H1 (cell line): ENCODE measurements at regions of chr7 and their contacts with region 1.

Region 1: DNA sequence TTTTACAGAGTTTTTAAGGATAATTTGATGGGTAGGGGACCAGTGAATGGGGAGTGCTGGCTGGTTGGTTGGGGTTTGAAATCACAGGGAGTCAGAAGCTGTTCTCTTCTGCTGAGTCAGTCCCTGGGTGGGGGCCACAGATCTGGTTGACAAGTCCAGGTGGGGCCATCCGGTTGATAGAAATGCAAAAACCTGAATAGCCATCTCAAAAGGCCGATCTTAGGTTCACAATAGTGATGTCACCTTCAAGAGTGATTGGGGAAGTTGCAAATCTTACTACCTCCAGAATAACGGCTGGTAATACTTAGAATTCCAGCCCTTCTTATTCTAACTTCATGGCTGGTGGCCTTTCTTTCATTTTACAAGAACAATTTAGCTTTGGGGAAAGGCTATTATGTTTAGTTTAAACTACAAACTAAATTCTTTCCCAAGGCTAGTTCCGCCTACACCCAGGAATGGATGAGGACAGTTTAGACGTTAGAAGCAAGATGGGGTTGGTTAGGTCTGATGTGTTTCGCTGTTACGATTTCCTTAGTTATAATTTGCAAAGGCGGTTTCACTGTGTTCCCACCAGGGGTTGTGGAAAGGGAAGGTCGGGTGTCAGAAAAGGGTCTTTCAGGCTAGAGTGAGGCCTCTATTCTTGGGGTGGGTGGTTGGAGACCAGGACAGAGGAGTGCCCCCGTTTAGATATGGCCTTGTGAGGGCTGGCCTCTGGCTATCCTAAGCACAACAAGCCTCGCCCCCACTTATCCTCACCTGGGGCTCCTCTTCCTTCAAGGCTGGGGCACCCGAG is 27.4 kb downstream of the IFT22 start:
- DNase-seq: peak; percentile 82 to 92
- H3K4me3 ChIP-seq: peak overlapping the region in 2 of 4 experiments; percentile 11 to 50; a peak in 3 of 8 replicates
- H3K27ac ChIP-seq: peak overlapping the region; percentile 91
- H3K4me1 ChIP-seq: peaks cover 9 to 37% (median 22%) of the 10 kb centered on the region in 4 experiments
- H3K27me3 ChIP-seq: no peaks in the 10 kb centered on the region
- CTCF ChIP-seq: peak in 1 of 3 experiments; percentile 3; a peak in 1 of 4 replicates
- EP300 ChIP-seq: peak in 1 of 2 experiments; percentile 96; a peak in 2 of 3 replicates
- POLR2A ChIP-seq: peak; percentile 70 to 78
- RAD21 ChIP-seq: no peak

Region 2: DNA sequence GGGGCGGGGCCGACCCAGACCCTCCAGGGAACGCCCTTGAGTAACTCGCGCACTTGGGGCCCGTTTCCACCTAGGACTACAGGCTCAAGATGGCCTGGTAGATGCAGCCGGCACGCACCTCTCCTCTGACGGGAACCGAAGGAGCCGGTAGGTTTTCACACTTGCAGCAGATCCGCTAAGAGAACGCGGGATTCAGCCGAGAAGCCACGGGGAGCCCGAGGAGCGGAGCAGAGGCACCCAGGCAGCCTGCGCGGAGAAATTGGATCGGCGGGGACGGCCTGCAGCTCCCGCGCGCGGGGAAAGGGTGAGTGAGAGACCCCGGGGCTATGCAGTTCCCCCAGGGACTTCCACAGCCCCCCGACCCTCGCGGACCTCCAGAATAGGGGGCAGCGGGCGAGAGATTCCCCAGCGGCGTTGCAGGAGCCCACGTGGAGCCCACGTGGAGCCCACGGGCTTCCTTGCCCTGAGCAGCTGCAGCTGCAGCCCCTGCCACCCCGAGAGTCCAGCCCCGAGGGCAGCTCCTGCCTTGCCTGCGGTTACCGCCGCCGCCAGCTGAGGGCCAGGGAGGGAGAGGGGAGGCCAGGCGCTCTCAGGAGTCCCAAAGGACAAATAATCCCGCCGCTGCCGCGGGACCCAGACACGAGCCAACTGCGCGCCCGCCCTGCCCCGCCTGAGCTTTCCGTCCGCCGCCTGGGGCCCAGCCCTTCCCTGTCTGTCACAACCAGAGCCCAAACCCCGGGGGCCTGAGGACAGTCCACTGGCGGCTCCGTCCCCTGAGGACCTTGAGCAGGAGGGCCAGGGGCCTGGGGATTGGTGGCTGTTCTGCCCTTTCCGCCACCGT is 14.2 kb after region 1 on chr7:
- CTCF ChIA-PET with region 1: interaction called, 8 read pairs
- POLR2A ChIA-PET with region 1: interaction called, 144 read pairs
- DNase-seq: peak in 1 of 2 experiments; percentile 89
- H3K4me3 ChIP-seq: peak overlapping the region; percentile 80 to 96 (median 86)
- H3K27ac ChIP-seq: peak overlapping the region; percentile 79; the same call in 1 of the 2 replicates
- H3K4me1 ChIP-seq: peaks cover 0 to 6% (median 3%) of the 10 kb centered on the region in 4 experiments; a peak in 2 of 7 replicates
- H3K27me3 ChIP-seq: no peaks in the 10 kb centered on the region
- CTCF ChIP-seq: no peak
- EP300 ChIP-seq: no peak
- POLR2A ChIP-seq: peak; percentile 86 to 90
- RAD21 ChIP-seq: no peak